HAP-1 (cell line): ENCODE measurements at regions of chr12 and their contacts with region 1.

Region 1: DNA sequence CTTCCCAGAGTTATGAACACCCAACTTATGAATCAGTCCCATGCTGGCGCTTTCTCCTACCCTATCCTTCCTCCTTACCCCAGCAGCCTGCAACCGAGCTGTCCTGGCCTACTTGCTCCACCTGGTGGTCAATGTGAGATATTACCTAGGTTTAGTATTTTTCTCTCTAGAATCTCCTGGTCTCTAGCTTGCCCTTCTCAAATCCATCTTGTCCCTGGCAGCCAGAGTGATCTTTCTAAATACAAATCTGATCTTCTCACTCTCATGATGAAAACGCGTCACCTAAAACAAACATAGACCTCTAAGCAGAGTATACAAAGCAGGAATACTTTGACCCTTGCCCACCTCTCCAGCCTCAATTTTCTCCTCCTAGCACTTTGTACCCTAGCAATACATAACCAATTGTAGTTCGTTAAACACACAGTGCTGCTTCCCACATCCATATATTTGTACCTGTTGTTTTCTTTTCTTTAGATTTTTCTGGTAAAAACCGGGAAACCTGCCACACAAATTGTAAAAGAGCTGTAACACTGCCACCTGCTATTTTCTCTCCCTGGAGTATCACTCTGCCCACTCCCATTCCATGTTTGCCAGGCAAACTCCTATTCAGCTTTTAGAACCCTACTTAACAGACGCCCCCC is 20.0 kb upstream of the TCP11L2 start:
- DNase-seq: peak; percentile 71 to 78
- H3K4me3 ChIP-seq: no peak overlapping the region
- H3K4me1 ChIP-seq: no peaks in the 10 kb centered on the region
- H3K27me3 ChIP-seq: peaks cover 13% of the 10 kb centered on the region

Region 2: DNA sequence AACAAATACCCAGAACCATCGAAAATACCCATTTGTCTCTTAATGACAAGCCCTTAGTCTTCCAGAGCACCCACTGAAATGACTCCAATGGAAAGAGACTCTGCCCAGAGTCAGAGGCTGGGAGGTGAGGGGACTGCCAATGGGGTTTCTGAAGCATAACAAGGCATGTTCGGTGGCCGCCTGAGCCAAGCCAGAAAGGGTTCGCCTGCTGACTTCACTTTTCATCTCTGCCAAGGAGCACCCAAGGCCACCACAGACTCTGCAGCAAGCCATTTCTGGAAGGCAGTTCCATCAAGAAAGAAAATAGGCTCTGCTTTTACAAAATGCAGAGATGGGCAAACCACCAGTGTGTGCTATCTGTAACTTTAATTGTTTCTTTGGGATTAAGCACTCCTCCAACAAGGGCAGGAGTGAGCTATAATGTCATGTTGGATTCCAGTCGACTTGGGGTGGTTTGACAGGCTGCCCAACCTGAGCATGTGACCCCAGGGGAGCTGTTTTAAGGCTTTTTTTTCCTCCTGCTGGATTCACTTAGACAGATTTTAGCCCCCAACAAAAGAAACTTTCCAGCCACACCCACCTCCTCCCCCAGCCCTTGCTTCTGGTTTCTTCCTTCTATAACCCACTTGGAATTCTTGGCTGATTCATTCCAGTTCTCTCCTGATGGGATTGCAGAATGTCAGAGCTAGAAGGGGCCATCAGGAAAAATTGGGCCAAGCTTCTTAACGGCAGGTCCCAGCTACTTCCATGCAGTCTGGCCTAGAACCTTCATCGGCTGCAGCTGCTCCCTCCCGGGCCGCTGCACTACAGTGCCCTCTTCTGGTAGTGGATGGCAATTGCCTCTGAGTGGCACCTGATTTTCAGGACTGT is 58.9 kb before region 1 on chr12:
- in situ Hi-C with region 1: loop called (anchors 5 kb)
- DNase-seq: peak; percentile 61 to 83
- H3K4me3 ChIP-seq: no peak overlapping the region
- H3K4me1 ChIP-seq: peaks cover 5% of the 10 kb centered on the region
- H3K27me3 ChIP-seq: no peaks in the 10 kb centered on the region